BJ (cell line): ENCODE measurements at regions of chr6 and their contacts with region 1.

Region 1: GRCh38 chr6:118897386-118897785 is 3.4 kb downstream of the ASF1A start:
- DNase-seq: no peak
- H3K4me3 ChIP-seq: no peak overlapping the region
- H3K27me3 ChIP-seq: no peaks in the 10 kb centered on the region
- CTCF ChIP-seq: no peak

Region 2: DNA sequence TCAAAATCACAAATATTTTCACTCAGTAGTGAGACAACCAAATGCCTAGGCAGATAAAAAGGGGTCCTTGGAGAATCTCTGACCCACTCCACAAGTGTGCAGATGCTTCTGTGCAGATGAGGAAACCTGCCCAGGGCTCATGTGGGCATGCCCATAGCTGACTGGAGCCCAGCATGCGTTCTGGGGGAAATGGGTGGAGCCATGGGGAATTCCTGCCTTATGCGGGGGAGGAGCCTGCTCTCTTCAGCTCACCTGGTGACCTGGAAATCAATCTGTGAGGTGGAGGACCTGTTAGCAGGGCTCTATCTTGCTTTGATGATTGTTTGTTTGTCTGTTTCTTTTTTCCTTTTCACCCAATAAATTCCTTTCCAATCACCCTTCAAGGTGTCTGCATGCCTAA is 372.7 kb before region 1 on chr6:
- CTCF ChIA-PET with region 1: no interaction called
- POLR2A ChIA-PET with region 1: no interaction called
- DNase-seq: no peak
- H3K4me3 ChIP-seq: no peak overlapping the region
- H3K27me3 ChIP-seq: no peaks in the 10 kb centered on the region
- CTCF ChIP-seq: no peak

Region 3: DNA sequence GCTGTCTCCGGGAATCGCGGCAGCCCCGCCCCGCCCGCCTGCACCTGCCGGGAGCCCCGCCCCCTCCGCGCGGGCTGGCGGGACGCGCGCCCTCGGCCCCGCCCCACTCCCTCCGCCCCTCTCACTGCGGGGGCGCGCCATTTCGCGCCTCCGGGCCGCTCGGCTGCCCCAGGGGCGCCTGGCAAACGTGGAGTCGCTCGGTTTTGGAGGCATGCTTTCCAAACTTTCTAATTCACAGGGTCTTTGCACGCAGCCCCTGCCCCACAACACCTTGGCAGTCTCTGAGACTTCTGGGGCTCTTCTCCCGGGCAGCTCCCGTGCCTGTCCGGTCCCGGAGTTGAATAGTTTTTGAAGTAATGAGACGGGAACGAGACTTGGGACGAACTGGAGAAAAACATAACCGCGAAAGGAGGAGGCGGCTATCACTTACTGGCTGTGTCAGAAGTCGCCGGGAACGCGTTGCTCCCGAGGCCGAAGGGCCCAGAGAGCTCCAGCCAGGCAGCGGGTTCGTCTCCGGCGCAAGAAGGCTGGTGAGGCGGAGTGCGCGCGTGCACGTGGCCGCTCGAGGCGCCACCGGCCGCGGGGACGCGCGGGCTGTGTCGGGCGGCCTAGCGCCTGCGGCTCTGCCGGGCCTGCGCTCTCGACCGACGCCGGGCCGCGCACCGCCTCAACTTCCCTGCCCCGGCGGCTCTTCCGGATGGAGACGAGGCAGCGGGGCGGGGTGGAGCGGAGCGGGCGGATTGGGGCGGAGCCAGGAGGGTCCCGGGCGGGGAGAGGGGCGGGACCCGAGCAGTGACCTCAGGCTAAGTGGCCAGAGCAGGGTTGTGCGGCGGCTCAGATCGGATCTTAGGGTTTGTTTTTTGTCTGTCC is 37.3 kb after region 1 on chr6 and contains the start of gene MCM9:
- CTCF ChIA-PET with region 1: interaction called, 5 read pairs
- POLR2A ChIA-PET with region 1: interaction called, 10 read pairs
- DNase-seq: peak; percentile 19
- H3K4me3 ChIP-seq: peak within 1 kb of the TSS; percentile 54
- H3K27me3 ChIP-seq: no peaks in the 10 kb centered on the region
- CTCF ChIP-seq: no peak
- polyA plus RNA-seq, gene MCM9: 1.7 and 1.9 TPM in 2 replicates